SK-N-SH (cell line): ENCODE measurements at regions of chr9 and their contacts with region 1.

Region 1: DNA sequence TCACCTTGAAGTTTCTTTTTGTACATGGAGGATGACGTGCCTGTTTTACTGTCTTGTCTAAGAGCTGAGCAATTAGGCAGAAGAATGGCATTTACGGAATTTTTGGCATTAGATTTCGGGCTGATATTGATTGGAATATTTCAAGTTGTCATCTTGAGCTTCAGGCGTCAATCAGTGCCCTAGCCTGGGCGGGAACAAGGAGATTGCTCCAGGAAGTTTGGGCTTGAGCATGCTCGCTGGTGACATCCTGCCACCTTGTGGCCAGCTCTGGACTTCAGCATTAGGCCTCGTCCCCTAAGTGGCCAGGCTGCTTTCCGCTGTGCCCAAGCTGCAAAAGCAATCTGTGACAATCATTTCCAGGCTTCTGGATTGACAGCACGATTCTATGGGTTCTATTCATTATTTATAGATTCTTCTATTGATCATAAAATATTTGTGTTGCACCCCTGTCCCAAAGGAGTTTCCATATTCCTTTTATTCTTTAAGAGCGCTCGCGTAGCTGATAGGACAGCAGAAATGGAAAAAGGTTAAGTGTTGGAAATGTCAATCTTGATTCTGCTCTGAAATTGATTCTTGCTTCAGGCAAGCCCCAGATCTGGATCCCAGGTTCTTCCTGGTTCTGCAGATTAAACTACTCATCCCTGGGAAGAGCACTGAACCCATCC is 79.3 kb downstream of the SLC28A3 start:
- DNase-seq: peak; percentile 69
- H3K4me3 ChIP-seq: peak overlapping the region in 1 of 2 experiments; percentile 33; a peak in 1 of 4 replicates
- H3K27ac ChIP-seq: no peak overlapping the region
- H3K4me1 ChIP-seq: peaks cover 0 to 5% of the 10 kb centered on the region in 2 experiments; a peak in 1 of 4 replicates
- H3K27me3 ChIP-seq: no peaks in the 10 kb centered on the region
- CTCF ChIP-seq: peak; percentile 88
- EP300 ChIP-seq: no peak
- RAD21 ChIP-seq: peak; percentile 98

Region 2: GRCh38 chr9:83937911-83938323 is 323.3 kb before region 1 on chr9:
- CTCF ChIA-PET with region 1: interaction called, 69 read pairs
- POLR2A ChIA-PET with region 1: no interaction called
- DNase-seq: peak; percentile 54
- H3K4me3 ChIP-seq: no peak overlapping the region
- H3K27ac ChIP-seq: no peak overlapping the region
- H3K4me1 ChIP-seq: peaks cover 2 to 32% of the 10 kb centered on the region in 2 experiments; a peak in 2 of 4 replicates
- H3K27me3 ChIP-seq: no peaks in the 10 kb centered on the region
- CTCF ChIP-seq: peak; percentile 73
- EP300 ChIP-seq: no peak
- RAD21 ChIP-seq: peak; percentile 92

Region 3: DNA sequence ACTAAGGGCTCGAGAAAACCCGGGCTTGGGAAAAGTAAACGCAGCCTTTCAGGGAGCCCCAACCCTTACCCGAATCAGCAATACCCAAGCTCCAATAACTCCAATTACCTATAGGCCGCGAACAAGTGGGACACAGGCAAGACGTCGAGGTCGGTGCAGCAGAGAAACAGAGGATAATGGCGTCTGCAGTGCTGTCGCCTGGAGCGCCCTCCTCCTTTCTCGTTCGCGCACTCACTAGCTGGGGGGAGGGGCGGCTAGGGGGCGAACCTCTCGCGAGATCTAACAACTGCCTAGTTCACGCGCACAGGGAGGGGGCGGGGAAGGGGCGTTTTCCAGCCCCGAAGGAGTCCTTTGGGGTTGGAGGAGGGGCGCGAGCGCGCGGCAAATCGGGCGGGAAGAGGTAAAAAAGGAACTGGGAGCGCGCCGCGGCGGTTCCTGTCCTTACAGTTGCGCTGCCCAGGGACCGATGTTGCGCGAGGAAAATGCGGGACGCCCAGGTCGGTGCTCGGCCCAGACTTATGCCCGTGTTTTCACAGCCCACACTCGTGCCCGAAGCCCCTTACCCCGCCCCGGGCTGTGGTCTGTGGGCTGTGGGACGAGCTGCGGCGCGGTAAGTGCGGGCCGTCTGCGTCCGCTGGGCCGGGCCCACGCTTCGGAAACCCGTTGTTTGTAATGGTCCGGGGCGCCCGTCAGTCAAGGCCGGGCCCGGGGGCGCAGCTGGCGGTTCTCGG is 280.7 kb before region 1 on chr9 and contains the start of gene RMI1:
- CTCF ChIA-PET with region 1: interaction called, 18 read pairs
- POLR2A ChIA-PET with region 1: interaction called, 8 read pairs
- DNase-seq: peak; percentile 95
- H3K4me3 ChIP-seq: peak within 1 kb of the TSS; percentile 97 to 99
- H3K27ac ChIP-seq: peak within 1 kb of the TSS; percentile 95 to 99
- H3K4me1 ChIP-seq: peaks cover 6 to 13% of the 10 kb centered on the region in 2 experiments; a peak in 3 of 4 replicates
- H3K27me3 ChIP-seq: no peaks in the 10 kb centered on the region
- CTCF ChIP-seq: peak; percentile 30; the same call in 1 of the 2 replicates
- EP300 ChIP-seq: peak; percentile 24 to 62
- RAD21 ChIP-seq: no peak
- polyA plus RNA-seq, gene RMI1: 0.96 and 1.0 TPM in 2 replicates

Region 4: DNA sequence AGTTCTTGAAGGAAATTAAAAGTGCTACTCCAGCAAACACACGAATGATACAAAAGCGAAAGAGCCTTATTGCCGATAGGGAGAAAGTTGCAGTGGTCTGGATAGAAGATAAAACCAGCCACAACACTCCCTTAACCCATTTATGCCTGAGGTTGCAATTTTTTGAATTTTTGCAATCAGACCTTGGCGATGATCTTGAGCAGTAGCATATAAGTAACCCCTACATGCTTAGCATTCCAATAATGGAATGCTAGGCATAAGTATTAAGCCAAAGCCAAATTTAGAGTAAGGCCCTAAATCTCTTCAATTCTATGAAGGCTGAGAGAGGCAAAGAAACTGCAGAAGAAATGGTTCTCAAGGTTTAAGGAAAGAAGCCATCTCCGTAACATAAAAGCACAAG is 74.1 kb before region 1 on chr9:
- CTCF ChIA-PET with region 1: interaction called, 12 read pairs
- POLR2A ChIA-PET with region 1: no interaction called
- DNase-seq: no peak
- H3K4me3 ChIP-seq: no peak overlapping the region
- H3K27ac ChIP-seq: no peak overlapping the region
- H3K4me1 ChIP-seq: peaks cover 3 to 4% of the 10 kb centered on the region in 2 experiments; a peak in 3 of 4 replicates
- H3K27me3 ChIP-seq: no peaks in the 10 kb centered on the region
- CTCF ChIP-seq: no peak
- EP300 ChIP-seq: no peak
- RAD21 ChIP-seq: no peak

Region 5: GRCh38 chr9:84278130-84278529 is 16.9 kb after region 1 on chr9:
- CTCF ChIA-PET with region 1: interaction called, 15 read pairs
- POLR2A ChIA-PET with region 1: no interaction called
- DNase-seq: no peak
- H3K4me3 ChIP-seq: no peak overlapping the region
- H3K27ac ChIP-seq: peak overlapping the region in 1 of 2 experiments; percentile 19; a peak in 1 of 4 replicates
- H3K4me1 ChIP-seq: 0 out of 4 replicates have a peak, but pooled peaks cover 0 to 7% of the 10 kb centered on the region in 2 experiments
- H3K27me3 ChIP-seq: no peaks in the 10 kb centered on the region
- CTCF ChIP-seq: no peak
- EP300 ChIP-seq: no peak
- RAD21 ChIP-seq: no peak

Region 6: GRCh38 chr9:84315278-84315877 is 54.2 kb after region 1 on chr9:
- CTCF ChIA-PET with region 1: interaction called, 17 read pairs
- POLR2A ChIA-PET with region 1: no interaction called
- DNase-seq: peak; percentile 53
- H3K4me3 ChIP-seq: peak overlapping the region in 1 of 2 experiments; percentile 38; a peak in 1 of 4 replicates
- H3K27ac ChIP-seq: no peak overlapping the region
- H3K4me1 ChIP-seq: no peaks in the 10 kb centered on the region
- H3K27me3 ChIP-seq: no peaks in the 10 kb centered on the region
- CTCF ChIP-seq: peak; percentile 88
- EP300 ChIP-seq: no peak
- RAD21 ChIP-seq: peak; percentile 82